ENCODE measurements at regions of chr10 and their contacts with region 1.

Region 1: GRCh38 chr10:50325449-50326171 is 74.3 kb upstream of the ASAH2 start:
- H3K4me3 Mint-ChIP-seq: no peak overlapping the region
- H3K27ac Mint-ChIP-seq: peak overlapping the region; percentile 53
- H3K4me1 Mint-ChIP-seq: peaks cover 65% of the 10 kb centered on the region
- H3K27me3 Mint-ChIP-seq: no peaks in the 10 kb centered on the region

Region 2: GRCh38 chr10:50063100-50063499 is 262.5 kb before region 1 on chr10:
- intact Hi-C with region 1: loop called (anchors 10 kb)
- H3K4me3 Mint-ChIP-seq: no peak overlapping the region
- H3K27ac Mint-ChIP-seq: no peak overlapping the region
- H3K4me1 Mint-ChIP-seq: no peaks in the 10 kb centered on the region
- H3K27me3 Mint-ChIP-seq: peaks cover 8% of the 10 kb centered on the region

Region 3: DNA sequence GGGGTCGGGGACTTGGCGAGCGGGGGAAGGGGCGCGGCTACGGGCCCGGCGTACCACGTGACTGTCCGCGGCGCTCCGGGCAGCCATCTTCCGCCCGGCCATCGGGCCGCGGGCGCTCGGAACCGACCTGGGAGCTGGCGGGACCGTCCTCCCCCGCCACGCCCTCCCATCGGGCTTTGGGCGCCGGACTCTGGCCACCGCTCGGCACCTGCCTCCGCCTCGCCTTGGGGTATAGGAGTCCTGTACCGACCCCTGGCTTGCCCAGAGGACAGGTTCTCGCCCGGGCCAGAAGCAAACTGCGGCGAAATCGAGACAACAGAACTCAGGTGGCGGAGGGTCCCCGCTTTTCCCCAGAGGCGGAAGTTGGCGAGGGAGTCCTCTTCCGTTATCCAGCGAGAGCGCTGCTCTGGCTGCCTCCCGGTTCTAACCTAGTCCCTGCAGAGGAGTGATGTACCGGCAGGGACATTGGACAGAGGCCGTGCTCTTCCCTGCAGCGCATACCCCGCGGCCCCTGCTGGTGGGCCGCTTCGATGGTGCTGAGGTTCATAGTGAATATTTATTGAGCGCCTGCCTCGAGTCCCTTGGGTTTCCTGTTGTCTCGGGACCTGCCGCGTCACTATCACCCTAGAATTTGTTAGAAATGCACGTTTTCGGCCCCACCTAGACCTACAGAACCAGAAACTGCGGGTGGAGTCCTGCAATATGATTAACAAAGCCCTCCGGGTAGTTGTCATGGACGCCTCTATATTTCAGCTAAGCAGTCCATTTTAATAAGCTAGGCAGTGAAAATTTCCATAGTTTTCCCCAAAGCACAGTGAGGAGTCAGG is 299.5 kb after region 1 on chr10:
- intact Hi-C with region 1: loop called (anchors 10 kb)
- H3K4me3 Mint-ChIP-seq: peak overlapping the region; percentile 75
- H3K27ac Mint-ChIP-seq: peak overlapping the region; percentile 97
- H3K4me1 Mint-ChIP-seq: peaks cover 15% of the 10 kb centered on the region
- H3K27me3 Mint-ChIP-seq: no peaks in the 10 kb centered on the region